CD8-positive, alpha-beta T cell (primary cell): ENCODE measurements at regions of chr1 and their contacts with region 1.

Region 1: DNA sequence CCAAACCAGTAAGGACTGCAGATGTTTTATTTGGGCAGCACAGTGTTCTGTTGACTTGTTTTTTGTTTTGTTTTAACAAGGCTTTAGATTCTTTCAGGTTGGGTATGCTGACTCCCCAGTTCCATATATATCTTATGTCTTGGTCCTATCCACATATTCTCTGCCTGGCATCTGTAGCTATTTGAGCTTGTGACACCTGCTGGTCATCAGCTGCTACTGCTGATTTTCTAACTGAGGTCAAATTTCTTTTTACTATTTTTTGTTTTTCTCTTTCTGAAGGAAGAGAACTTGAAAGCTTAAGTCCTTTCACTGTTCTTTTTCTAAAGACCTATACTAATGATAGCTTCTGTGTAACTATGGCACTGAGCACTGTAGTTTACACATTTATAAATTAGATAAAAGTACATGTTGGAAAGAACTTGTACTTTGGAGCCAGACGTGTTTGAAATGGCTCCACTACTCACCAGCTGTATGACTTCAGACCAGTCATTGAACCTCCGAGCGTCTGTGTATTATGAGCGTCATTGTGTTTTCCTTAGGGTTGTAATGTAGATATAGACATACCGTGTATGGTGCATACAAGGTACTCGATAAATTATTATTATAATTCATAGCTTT is 109.4 kb downstream of the NRDC start:
- DNase-seq: peak in 4 of 9 experiments; percentile 17 to 66 (median 36)
- ATAC-seq: peak; percentile 64
- H3K4me3 ChIP-seq: no peak overlapping the region
- H3K4me3 Mint-ChIP-seq: no peak overlapping the region
- H3K27ac ChIP-seq: no peak overlapping the region
- H3K27ac Mint-ChIP-seq: peak overlapping the region; percentile 3
- H3K4me1 ChIP-seq: no peaks in the 10 kb centered on the region
- H3K4me1 Mint-ChIP-seq: peaks cover 6% of the 10 kb centered on the region
- H3K27me3 ChIP-seq: no peaks in the 10 kb centered on the region
- H3K27me3 Mint-ChIP-seq: no peaks in the 10 kb centered on the region
- CTCF ChIP-seq: peak; percentile 95

Region 2: DNA sequence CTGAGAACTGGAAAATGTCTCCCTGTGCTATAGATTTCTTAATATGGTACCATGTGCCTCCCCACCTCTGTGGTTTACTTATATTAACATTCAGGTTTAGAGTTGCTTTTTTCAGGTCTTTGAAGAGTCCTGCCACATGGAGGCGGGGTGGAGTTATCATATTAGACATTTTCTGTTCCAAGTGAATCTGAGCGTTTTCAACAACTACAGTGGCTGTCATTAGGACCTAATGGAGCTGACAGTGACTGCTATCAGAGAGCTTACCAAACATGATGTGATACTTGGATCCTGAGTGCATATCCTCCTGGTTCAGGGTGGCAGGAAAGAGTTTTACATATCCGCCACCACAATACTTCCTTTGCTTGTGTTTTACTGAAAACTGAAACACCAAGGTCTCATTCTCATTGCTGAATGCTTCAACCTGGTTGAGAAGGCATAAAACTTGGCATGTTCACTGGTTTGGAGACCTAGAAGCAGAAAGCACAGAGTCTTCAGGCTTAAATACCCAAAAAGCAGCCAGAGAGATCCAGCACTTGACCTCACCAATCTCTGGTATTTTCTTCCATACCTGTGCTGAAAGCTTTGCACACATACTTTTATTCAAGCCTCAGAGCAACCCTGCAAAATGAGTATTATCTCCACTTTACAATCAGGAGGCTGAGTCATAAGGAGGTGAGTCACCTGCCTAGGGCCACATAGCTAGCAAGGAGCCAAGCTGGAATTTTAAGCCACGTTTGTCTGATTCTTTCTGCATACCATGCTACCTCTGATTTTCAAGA is 199.6 kb before region 1 on chr1:
- CTCF ChIA-PET with region 1: interaction called, 5 read pairs
- POLR2A ChIA-PET with region 1: no interaction called
- intact Hi-C with region 1: loop called (anchors 2 to 10 kb)
- DNase-seq: peak in 6 of 9 experiments; percentile 9 to 49 (median 29)
- ATAC-seq: peak; percentile 80
- H3K4me3 ChIP-seq: no peak overlapping the region
- H3K4me3 Mint-ChIP-seq: peak overlapping the region; percentile 33
- H3K27ac ChIP-seq: peak overlapping the region in 1 of 2 experiments; percentile 55
- H3K27ac Mint-ChIP-seq: peak overlapping the region; percentile 50
- H3K4me1 ChIP-seq: peaks cover 26% of the 10 kb centered on the region
- H3K4me1 Mint-ChIP-seq: peaks cover 27% of the 10 kb centered on the region
- H3K27me3 ChIP-seq: no peaks in the 10 kb centered on the region
- H3K27me3 Mint-ChIP-seq: no peaks in the 10 kb centered on the region
- CTCF ChIP-seq: no peak

Region 3: DNA sequence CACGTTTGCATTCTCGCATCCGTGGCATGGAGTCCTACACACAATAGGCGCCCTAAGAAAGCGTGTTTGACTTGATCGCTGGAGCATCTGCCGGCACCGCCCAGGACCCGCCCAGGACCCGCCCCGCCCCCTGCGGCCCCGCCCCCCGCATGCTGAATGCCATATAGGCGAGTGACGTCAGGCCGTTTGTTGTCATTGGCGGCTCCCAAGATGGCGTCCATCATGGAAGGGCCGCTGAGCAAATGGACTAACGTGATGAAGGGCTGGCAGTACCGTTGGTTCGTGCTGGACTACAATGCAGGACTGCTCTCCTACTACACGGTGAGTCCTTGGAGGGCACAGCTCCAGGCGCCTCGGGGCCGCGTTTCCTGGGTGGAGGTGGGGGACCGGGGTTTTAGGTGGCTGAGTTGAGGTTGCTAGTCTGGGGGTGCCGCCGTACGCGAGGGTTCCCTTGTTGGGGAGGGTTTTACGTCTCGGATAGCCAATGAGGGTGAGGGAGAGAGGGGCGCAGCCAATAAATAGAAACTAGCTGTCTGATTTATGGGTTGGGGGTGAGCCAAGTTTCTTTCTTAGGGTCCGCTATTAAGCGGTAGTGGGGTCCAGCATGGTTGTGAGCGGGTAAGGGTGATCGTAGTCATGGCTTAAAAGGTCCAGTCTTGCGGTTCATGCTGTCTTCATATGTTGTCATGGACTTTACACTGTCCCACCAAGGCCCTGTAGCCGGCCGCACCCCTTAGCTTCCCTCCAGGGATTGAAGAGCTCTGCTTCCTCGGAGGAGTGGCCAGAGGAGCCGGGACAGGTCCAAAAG is 152.0 kb before region 1 on chr1 and contains the start of gene OSBPL9:
- CTCF ChIA-PET with region 1: interaction called, 4 read pairs
- POLR2A ChIA-PET with region 1: no interaction called
- intact Hi-C with region 1: loop called in 1 of 2 experiments (anchors 2 kb)
- DNase-seq: peak; percentile 78 to 94 (median 87)
- ATAC-seq: peak; percentile 93
- H3K4me3 ChIP-seq: peak within 1 kb of the TSS; percentile 90 to 98
- H3K4me3 Mint-ChIP-seq: peak within 1 kb of the TSS; percentile 100
- H3K27ac ChIP-seq: peak within 1 kb of the TSS; percentile 84
- H3K27ac Mint-ChIP-seq: peak within 1 kb of the TSS; percentile 99
- H3K4me1 ChIP-seq: peaks cover 23% of the 10 kb centered on the region
- H3K4me1 Mint-ChIP-seq: peaks cover 42% of the 10 kb centered on the region
- H3K27me3 ChIP-seq: no peaks in the 10 kb centered on the region
- H3K27me3 Mint-ChIP-seq: peaks cover under 1% of the 10 kb centered on the region
- CTCF ChIP-seq: no peak
- total RNA-seq, gene OSBPL9: 48.5 to 49.2 TPM

Region 4: DNA sequence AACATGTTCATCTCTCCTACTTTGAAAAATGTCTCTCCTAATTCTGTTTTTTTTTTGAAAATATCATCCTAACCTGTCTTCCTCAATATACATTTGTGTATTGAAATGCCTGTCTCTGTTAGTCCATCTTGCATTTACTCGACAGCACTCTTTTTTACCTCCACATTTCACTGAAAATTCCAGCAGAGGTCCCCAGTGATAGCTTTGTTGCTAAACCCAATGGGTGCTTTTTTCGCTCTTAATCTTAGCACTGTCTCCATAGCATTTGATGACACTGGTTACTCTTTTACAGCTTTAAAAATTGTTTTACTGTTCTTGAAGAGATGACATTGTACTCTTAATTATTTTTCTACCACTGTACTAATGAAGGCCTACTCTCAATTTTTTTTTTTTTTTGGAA is 141.4 kb before region 1 on chr1:
- CTCF ChIA-PET with region 1: interaction called, 6 read pairs
- POLR2A ChIA-PET with region 1: no interaction called
- intact Hi-C with region 1: loop called (anchors 1 to 5 kb)
- DNase-seq: peak in 2 of 9 experiments; percentile 15 to 35
- ATAC-seq: no peak
- H3K4me3 ChIP-seq: no peak overlapping the region
- H3K4me3 Mint-ChIP-seq: no peak overlapping the region
- H3K27ac ChIP-seq: no peak overlapping the region
- H3K27ac Mint-ChIP-seq: no peak overlapping the region
- H3K4me1 ChIP-seq: no peaks in the 10 kb centered on the region
- H3K4me1 Mint-ChIP-seq: peaks cover 40% of the 10 kb centered on the region
- H3K27me3 ChIP-seq: no peaks in the 10 kb centered on the region
- H3K27me3 Mint-ChIP-seq: no peaks in the 10 kb centered on the region
- CTCF ChIP-seq: no peak